Heart left ventricle (tissue), 16 donors: ENCODE measurements at regions of chr19 and their contacts with region 1.

Region 1: DNA sequence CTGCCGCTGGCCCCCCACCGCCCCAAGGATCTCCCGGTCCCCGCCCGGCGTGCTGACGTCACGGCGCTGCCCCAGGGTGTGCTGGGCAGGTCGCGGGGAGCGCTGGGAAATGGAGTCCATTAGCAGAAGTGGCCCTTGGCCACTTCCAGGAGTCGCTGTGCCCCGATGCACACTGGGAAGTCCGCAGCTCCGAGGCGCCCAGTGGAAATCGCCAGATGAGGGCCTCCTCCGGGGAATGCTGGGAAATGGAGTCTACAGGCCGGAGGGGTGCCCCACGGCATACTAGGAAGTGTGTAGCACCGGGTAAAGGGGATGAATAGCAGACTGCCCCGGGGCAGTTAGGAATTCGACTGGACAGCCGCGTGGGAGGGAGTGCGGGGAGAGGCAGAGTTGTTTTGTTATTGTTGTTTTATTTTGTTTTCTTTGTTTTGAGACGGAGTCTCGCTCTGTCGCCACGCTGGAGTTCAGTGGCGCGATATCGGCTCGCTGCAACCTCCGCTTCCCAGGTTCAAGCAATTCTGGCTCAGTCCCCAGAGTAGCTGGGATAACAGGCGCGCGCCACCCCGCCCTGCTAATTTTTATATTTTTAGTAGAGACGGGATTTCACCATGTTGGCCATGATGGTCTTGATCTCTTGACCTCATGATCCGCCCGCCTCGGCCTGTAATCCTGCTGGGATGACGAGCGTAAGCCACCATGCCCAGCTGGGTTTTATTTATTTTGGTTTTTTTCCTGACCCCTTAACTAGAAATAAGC is at the start of gene PPP1R12C:
- DNase-seq: peak; percentile 99 to 100 (median 99)
- ATAC-seq: peak; percentile 80 to 86 (median 84)
- H3K4me3 ChIP-seq: peak within 1 kb of the TSS; percentile 66 to 98 (median 90)
- H3K27ac ChIP-seq: peak within 1 kb of the TSS; percentile 90 to 99 (median 96)
- H3K4me1 ChIP-seq: peaks cover 5 to 50% (median 36%) of the 10 kb centered on the region in 12 donors
- H3K27me3 ChIP-seq: no peaks in the 10 kb centered on the region
- CTCF ChIP-seq: peak in 1 of 12 donors; percentile 19
- POLR2A ChIP-seq: peak in 1 of 2 donors; percentile 68
- total RNA-seq, gene PPP1R12C: 116 to 324 (median 209) TPM

Region 2: DNA sequence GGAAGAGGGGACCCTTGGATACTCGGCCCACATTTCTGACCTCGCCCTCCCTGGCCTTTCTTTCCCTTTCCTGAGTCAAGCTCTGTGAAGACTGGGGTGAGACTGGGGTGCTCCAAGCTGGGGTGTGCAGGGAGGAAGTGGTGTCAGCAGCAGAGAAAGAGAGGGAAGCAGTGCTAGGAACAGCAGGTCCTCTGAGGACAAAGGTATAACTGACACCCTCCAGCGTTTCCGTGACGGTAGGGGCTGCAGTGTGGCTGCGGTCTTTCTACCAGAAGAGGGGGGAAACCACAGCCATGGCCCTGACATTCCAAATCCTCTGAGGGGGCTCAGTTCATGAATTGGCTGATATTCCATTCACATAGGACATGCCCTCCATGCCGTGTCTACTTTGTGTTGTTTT is 266.5 kb before region 1 on chr19:
- intact Hi-C with region 1: no loop called
- DNase-seq: no peak
- ATAC-seq: no peak
- H3K4me3 ChIP-seq: no peak overlapping the region
- H3K27ac ChIP-seq: no peak overlapping the region
- H3K4me1 ChIP-seq: no peaks in the 10 kb centered on the region
- H3K27me3 ChIP-seq: peaks cover 0 to 12% (median 0%) of the 10 kb centered on the region in 9 donors
- CTCF ChIP-seq: no peak
- POLR2A ChIP-seq: no peak

Region 3: GRCh38 chr19:55062734-55063492 is 54.9 kb before region 1 on chr19 and contains the start of gene RDH13:
- intact Hi-C with region 1: loop called in 1 of 10 experiments (anchors 2 kb)
- DNase-seq: peak; percentile 96 to 98 (median 98)
- ATAC-seq: peak; percentile 98 to 99 (median 99)
- H3K4me3 ChIP-seq: peak within 1 kb of the TSS; percentile 67 to 100 (median 95)
- H3K27ac ChIP-seq: peak within 1 kb of the TSS; percentile 61 to 94 (median 88)
- H3K4me1 ChIP-seq: peaks cover 0 to 22% (median 11%) of the 10 kb centered on the region in 12 donors
- H3K27me3 ChIP-seq: peaks cover 0 to 9% (median 0%) of the 10 kb centered on the region in 9 donors
- CTCF ChIP-seq: no peak
- POLR2A ChIP-seq: peak in 1 of 2 donors; percentile 64
- total RNA-seq, gene RDH13: 29.3 to 60.7 (median 43.0) TPM

Region 4: DNA sequence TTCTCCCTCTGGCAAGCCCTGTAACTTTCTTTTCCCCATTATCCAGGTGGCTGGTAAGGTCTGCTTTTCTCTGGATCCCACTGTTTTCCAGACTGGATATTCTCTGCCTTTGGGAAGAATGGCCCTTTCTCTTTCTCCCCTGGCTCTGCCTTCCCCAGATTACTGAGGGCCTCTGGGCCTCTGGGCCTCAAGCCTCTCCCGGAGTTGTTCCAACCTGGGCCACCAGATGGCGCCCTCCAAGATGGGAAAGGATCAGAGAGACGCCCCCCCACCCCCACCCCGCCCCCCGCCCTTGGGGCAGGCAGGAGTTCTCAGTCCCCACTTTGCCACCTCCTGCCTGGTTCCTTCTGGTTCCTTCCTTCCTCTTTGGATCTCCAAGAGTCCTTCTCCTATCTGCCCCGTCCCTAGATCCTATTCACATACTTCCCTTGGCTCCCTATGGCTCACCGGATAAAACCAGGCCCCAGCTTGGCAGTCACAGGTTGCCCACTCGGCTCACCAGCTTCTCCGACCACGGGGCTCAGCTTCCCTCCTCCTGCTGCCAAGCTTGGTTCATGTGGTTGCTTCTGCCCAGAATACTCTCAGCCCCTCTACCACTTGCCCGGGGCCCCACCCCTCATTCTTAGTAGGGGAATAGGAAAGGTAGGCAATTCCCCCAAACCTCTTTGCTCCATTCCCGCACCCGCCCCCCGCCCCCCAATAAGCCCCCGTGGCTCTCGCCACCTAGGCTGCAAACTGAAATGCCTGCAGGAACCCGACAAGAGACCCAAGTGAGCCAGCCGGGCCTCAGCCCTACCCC is 29.1 kb before region 1 on chr19:
- intact Hi-C with region 1: loop called in 1 of 10 experiments (anchors 2 kb)
- DNase-seq: peak in 4 of 5 donors; percentile 66 to 88 (median 74)
- ATAC-seq: peak in 3 of 4 donors; percentile 11 to 27 (median 27)
- H3K4me3 ChIP-seq: peak overlapping the region in 6 of 12 donors; percentile 46 to 67 (median 58)
- H3K27ac ChIP-seq: peak overlapping the region in 5 of 12 donors; percentile 3 to 66 (median 28)
- H3K4me1 ChIP-seq: peaks cover 0 to 42% (median 22%) of the 10 kb centered on the region in 12 donors
- H3K27me3 ChIP-seq: peaks cover 0 to 39% (median 12%) of the 10 kb centered on the region in 9 donors
- CTCF ChIP-seq: peak; percentile 81 to 96 (median 88)
- POLR2A ChIP-seq: no peak

Region 5: DNA sequence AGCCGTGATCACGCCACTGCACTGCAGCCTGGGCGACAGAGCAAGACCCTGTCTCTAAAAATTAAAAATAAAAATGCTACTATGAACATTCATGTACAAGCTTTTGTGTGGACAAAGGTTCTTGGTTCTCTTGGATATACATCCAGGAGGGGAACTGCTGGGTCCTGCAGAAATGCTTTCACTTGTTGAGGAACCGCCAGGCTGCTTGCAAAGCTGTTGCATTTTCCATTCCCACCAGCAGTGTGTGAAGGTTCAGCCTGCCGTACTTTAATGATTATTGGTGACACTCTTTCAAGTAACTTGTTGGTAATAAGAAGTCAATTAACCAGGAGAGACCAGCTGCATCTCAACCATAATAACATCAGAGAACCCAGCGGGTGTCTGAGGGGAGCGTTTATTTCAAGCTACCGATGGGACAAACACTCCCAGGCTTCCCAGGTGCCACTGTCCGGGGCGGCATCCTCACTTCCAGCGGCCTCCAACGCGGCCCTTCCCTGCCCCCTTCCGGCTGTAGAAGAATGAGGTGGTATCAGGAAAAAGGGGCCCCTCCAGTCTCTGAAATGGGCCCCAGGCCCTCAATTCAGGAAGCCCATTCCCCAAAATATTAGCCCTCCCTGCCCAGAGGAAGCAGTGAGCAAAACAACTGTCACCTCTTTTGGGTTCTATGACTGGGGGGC is 14.8 kb after region 1 on chr19:
- intact Hi-C with region 1: no loop called
- DNase-seq: no peak
- ATAC-seq: no peak
- H3K4me3 ChIP-seq: no peak overlapping the region
- H3K27ac ChIP-seq: no peak overlapping the region
- H3K4me1 ChIP-seq: no peaks in the 10 kb centered on the region
- H3K27me3 ChIP-seq: peaks cover 0 to 20% (median 0%) of the 10 kb centered on the region in 9 donors
- CTCF ChIP-seq: peak in 4 of 12 donors; percentile 23 to 43 (median 29)
- POLR2A ChIP-seq: no peak

Region 6: DNA sequence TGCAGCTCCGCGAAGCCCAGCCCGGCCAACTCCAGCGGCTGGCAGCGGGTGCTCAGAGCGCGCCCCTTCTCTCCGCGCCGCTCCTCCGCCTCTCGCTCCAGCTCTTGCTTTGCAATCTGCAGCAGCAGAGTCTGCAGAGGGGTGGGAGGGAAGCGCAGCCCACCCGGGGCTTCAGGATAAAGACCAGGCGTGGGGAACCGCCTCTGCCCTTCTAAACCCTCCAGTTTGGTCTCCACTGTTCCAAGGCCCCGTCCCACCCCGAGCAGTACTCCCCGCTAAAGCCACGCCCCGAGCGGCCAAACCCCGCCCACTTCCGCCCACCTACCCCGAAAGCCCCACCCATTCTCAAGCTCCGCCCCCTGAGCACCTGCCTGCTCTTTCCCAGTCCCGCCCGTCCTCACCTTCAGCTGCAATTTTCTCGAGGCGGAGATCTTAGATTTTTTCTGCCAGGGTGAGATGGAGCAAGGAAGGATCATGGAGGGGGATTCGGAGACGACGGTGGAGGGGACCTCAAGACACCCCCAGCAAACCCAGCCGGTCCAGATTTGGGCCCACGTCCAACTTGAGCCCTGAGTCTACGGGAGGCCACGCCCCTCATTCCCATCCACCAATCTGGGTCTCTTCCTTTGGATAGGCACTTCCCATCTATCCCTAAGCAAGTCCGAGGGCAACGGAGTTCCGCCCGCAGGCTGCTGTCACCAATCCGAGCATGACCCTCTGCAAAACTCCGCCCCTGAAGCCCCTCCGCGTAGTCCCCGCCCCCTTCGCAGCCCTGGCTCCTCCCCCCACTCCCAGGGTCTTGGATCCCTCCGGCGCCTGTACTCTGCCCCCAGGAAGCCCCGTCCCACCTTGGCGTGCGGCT is 38.6 kb after region 1 on chr19:
- intact Hi-C with region 1: loop called in 1 of 10 experiments (anchors 5 kb)
- DNase-seq: peak; percentile 70 to 91 (median 81)
- ATAC-seq: peak; percentile 33 to 69 (median 56)
- H3K4me3 ChIP-seq: peak overlapping the region; percentile 47 to 92 (median 66)
- H3K27ac ChIP-seq: peak overlapping the region; percentile 71 to 100 (median 94)
- H3K4me1 ChIP-seq: peaks cover 0 to 66% (median 13%) of the 10 kb centered on the region in 12 donors
- H3K27me3 ChIP-seq: peaks cover 0 to 31% (median 8%) of the 10 kb centered on the region in 9 donors
- CTCF ChIP-seq: no peak
- POLR2A ChIP-seq: peak in 1 of 2 donors; percentile 10